ENCODE measurements at regions of chr4 and their contacts with region 1.

Region 1: GRCh38 chr4:112747036-112747435 is 110.1 kb downstream of the LARP7 start:
- DNase-seq: peak; percentile 28 to 89
- H3K4me3 ChIP-seq: no peak overlapping the region
- H3K27ac ChIP-seq: peak overlapping the region; percentile 63
- H3K4me1 ChIP-seq: peaks cover 43% of the 10 kb centered on the region
- H3K27me3 ChIP-seq: no peaks in the 10 kb centered on the region
- CTCF ChIP-seq: no peak

Region 2: DNA sequence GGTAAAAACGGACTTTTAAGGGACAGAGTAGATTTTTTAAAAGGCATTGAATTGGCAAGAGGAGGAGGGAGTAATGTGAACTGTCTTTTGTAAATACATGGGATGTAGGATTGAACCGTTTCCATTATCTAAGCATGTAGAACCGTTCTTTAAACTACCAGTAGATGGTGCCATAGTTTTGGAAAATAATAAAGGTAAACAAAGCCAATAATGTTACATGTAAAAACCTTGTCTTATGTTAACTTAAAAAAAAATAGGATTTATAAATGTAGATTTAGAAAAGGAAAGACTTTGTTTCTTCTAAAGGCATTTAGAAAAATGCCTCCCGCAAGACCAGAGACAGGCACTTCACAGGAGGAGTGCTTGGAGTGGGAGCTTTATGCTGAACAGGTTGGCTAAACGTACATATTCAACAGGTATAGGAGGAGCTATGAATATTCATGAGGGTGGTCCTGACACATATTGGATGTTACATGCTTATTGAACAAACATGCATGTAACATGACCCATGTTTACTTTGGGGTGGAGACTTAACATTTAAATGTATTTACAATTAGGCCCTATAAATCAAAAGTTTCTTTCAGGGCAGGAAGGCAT is 647.2 kb before region 1 on chr4:
- CTCF ChIA-PET with region 1: no interaction called
- POLR2A ChIA-PET with region 1: no interaction called
- intact Hi-C with region 1: loop called (anchors 10 kb)
- DNase-seq: peak in 1 of 2 experiments; percentile 63
- H3K4me3 ChIP-seq: no peak overlapping the region
- H3K27ac ChIP-seq: no peak overlapping the region
- H3K4me1 ChIP-seq: peaks cover 5% of the 10 kb centered on the region; the same call in 1 of the 2 replicates
- H3K27me3 ChIP-seq: no peaks in the 10 kb centered on the region
- CTCF ChIP-seq: peak; percentile 87

Region 3: GRCh38 chr4:112473985-112474384 is 273.1 kb before region 1 on chr4:
- CTCF ChIA-PET with region 1: no interaction called
- POLR2A ChIA-PET with region 1: no interaction called
- intact Hi-C with region 1: no loop called
- DNase-seq: no peak
- H3K4me3 ChIP-seq: no peak overlapping the region
- H3K27ac ChIP-seq: no peak overlapping the region
- H3K4me1 ChIP-seq: no peaks in the 10 kb centered on the region
- H3K27me3 ChIP-seq: no peaks in the 10 kb centered on the region
- CTCF ChIP-seq: no peak

Region 4: GRCh38 chr4:112636688-112637551 is 110.1 kb before region 1 on chr4 and contains the starts of genes LARP7 and ZGRF1:
- CTCF ChIA-PET with region 1: no interaction called
- POLR2A ChIA-PET with region 1: interaction called, 11 read pairs
- intact Hi-C with region 1: loop called (anchors 1 kb)
- DNase-seq: peak; percentile 97 to 98
- H3K4me3 ChIP-seq: peak within 1 kb of the TSS; percentile 76
- H3K27ac ChIP-seq: peak within 1 kb of the TSS; percentile 78
- H3K4me1 ChIP-seq: peaks cover 20% of the 10 kb centered on the region
- H3K27me3 ChIP-seq: no peaks in the 10 kb centered on the region
- CTCF ChIP-seq: peak; percentile 100
- total RNA-seq, gene LARP7: 35.8 and 47.8 TPM in 2 replicates
- total RNA-seq, gene ZGRF1: 17.3 and 18.9 TPM in 2 replicates

Region 5: GRCh38 chr4:112704991-112705845 is 41.8 kb before region 1 on chr4:
- CTCF ChIA-PET with region 1: no interaction called
- POLR2A ChIA-PET with region 1: no interaction called
- intact Hi-C with region 1: loop called (anchors 5 kb)
- DNase-seq: peak in 1 of 2 experiments; percentile 53
- H3K4me3 ChIP-seq: peak overlapping the region; percentile 54; the same call in 1 of the 2 replicates
- H3K27ac ChIP-seq: no peak overlapping the region
- H3K4me1 ChIP-seq: 0 out of 2 replicates have a peak, but pooled peaks cover 6% of the 10 kb centered on the region
- H3K27me3 ChIP-seq: peaks cover 37% of the 10 kb centered on the region
- CTCF ChIP-seq: no peak

Region 6: DNA sequence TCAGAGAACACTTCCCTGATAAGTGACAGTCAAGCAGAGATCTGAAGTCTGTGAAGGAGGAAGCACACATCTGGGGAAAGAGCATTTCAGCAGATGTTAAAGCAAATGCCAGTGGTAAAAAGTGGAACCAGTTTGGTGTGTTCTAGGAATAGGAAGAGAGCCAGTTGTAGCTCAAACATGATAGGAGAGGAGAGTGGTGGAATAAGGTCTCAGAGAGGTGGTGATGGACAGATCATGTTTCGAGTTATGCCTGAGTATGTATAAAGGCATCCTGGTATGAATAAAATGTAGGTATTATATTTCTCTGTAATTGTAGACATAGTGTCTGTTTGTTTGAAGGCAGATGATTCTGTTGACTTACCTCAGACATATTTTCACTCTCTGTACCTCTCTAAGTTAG is 21.0 kb before region 1 on chr4:
- CTCF ChIA-PET with region 1: no interaction called
- POLR2A ChIA-PET with region 1: no interaction called
- intact Hi-C with region 1: loop called (anchors 1 kb)
- DNase-seq: peak; percentile 40 to 77
- H3K4me3 ChIP-seq: no peak overlapping the region
- H3K27ac ChIP-seq: no peak overlapping the region
- H3K4me1 ChIP-seq: peaks cover 14% of the 10 kb centered on the region
- H3K27me3 ChIP-seq: no peaks in the 10 kb centered on the region
- CTCF ChIP-seq: no peak

Region 7: GRCh38 chr4:112735474-112735951 is 11.5 kb before region 1 on chr4:
- CTCF ChIA-PET with region 1: no interaction called
- POLR2A ChIA-PET with region 1: interaction called, 16 read pairs
- intact Hi-C with region 1: no loop called
- DNase-seq: peak in 1 of 2 experiments; percentile 67
- H3K4me3 ChIP-seq: no peak overlapping the region
- H3K27ac ChIP-seq: peak overlapping the region; percentile 51
- H3K4me1 ChIP-seq: peaks cover 15% of the 10 kb centered on the region; the same call in 1 of the 2 replicates
- H3K27me3 ChIP-seq: no peaks in the 10 kb centered on the region
- CTCF ChIP-seq: no peak

Measured in PC-9 (cell line).